ENCODE measurements at regions of chr14 and their contacts with region 1.

Region 1: GRCh38 chr14:64986578-64987571 is at the start of gene FNTB:
- DNase-seq: peak; percentile 96
- ATAC-seq: peak; percentile 98
- H3K4me3 Mint-ChIP-seq: peak within 1 kb of the TSS; percentile 97
- H3K27ac Mint-ChIP-seq: peak within 1 kb of the TSS; percentile 96
- H3K4me1 Mint-ChIP-seq: peaks cover 52% of the 10 kb centered on the region
- H3K27me3 Mint-ChIP-seq: peaks cover 19% of the 10 kb centered on the region
- total RNA-seq, gene FNTB: 17.9 to 18.8 TPM

Region 2: GRCh38 chr14:64788668-64789067 is 198.2 kb before region 1 on chr14:
- CTCF ChIA-PET with region 1: no interaction called
- POLR2A ChIA-PET with region 1: no interaction called
- DNase-seq: no peak
- ATAC-seq: no peak
- H3K4me3 Mint-ChIP-seq: no peak overlapping the region
- H3K27ac Mint-ChIP-seq: no peak overlapping the region
- H3K4me1 Mint-ChIP-seq: no peaks in the 10 kb centered on the region
- H3K27me3 Mint-ChIP-seq: no peaks in the 10 kb centered on the region

Region 3: DNA sequence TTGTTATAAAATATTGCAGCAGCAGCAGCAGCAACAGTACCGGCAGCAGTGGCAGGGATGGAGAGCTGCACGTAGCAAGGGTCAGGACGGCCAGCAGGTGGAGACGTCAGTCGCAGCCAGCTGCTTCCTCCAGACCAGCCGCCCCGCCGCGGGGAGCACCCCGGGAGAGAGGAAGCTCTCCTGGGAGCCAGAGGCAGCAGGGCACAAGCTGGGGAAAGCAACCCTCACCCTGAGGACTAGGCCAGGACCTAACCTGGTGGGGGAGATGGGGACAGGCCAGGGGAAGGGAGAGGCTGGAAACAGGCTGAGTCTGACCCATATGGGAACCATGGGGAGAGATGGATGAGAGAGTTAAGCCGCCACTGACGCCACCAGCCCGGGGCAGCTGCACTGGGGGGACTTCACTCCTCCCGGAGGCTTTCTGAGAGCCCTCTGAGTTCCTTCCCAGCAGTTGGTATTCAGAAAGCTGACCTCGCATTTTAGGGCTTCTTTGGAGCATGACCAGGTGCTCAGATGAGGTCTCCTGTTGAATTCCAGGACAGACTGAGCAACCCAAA is 163.5 kb before region 1 on chr14:
- CTCF ChIA-PET with region 1: interaction called, 16 read pairs
- POLR2A ChIA-PET with region 1: no interaction called
- DNase-seq: peak; percentile 73
- ATAC-seq: peak; percentile 95
- H3K4me3 Mint-ChIP-seq: no peak overlapping the region
- H3K27ac Mint-ChIP-seq: no peak overlapping the region
- H3K4me1 Mint-ChIP-seq: peaks cover 4% of the 10 kb centered on the region
- H3K27me3 Mint-ChIP-seq: peaks cover 43% of the 10 kb centered on the region

Region 4: GRCh38 chr14:64928239-64929013 is 58.4 kb before region 1 on chr14:
- CTCF ChIA-PET with region 1: interaction called, 10 read pairs
- POLR2A ChIA-PET with region 1: no interaction called
- DNase-seq: no peak
- ATAC-seq: peak; percentile 82
- H3K4me3 Mint-ChIP-seq: no peak overlapping the region
- H3K27ac Mint-ChIP-seq: no peak overlapping the region
- H3K4me1 Mint-ChIP-seq: peaks cover 20% of the 10 kb centered on the region
- H3K27me3 Mint-ChIP-seq: no peaks in the 10 kb centered on the region

Region 5: GRCh38 chr14:64960762-64961278 is 26.1 kb before region 1 on chr14:
- CTCF ChIA-PET with region 1: no interaction called
- POLR2A ChIA-PET with region 1: no interaction called
- DNase-seq: no peak
- ATAC-seq: no peak
- H3K4me3 Mint-ChIP-seq: no peak overlapping the region
- H3K27ac Mint-ChIP-seq: no peak overlapping the region
- H3K4me1 Mint-ChIP-seq: peaks cover 7% of the 10 kb centered on the region
- H3K27me3 Mint-ChIP-seq: no peaks in the 10 kb centered on the region

Region 6: GRCh38 chr14:65019944-65020566 is 33.2 kb after region 1 on chr14:
- CTCF ChIA-PET with region 1: interaction called, 47 read pairs
- POLR2A ChIA-PET with region 1: interaction called, 5 read pairs
- DNase-seq: no peak
- ATAC-seq: peak; percentile 64
- H3K4me3 Mint-ChIP-seq: no peak overlapping the region
- H3K27ac Mint-ChIP-seq: no peak overlapping the region
- H3K4me1 Mint-ChIP-seq: no peaks in the 10 kb centered on the region
- H3K27me3 Mint-ChIP-seq: no peaks in the 10 kb centered on the region

Region 7: GRCh38 chr14:65164068-65164824 is 177.4 kb after region 1 on chr14:
- CTCF ChIA-PET with region 1: interaction called, 11 read pairs
- POLR2A ChIA-PET with region 1: no interaction called
- DNase-seq: peak; percentile 67
- ATAC-seq: peak; percentile 71
- H3K4me3 Mint-ChIP-seq: no peak overlapping the region
- H3K27ac Mint-ChIP-seq: peak overlapping the region; percentile 27
- H3K4me1 Mint-ChIP-seq: peaks cover 29% of the 10 kb centered on the region
- H3K27me3 Mint-ChIP-seq: no peaks in the 10 kb centered on the region